Ascending aorta (tissue), 2 donors: ENCODE measurements at regions of chr15 and their contacts with region 1.

Region 1: DNA sequence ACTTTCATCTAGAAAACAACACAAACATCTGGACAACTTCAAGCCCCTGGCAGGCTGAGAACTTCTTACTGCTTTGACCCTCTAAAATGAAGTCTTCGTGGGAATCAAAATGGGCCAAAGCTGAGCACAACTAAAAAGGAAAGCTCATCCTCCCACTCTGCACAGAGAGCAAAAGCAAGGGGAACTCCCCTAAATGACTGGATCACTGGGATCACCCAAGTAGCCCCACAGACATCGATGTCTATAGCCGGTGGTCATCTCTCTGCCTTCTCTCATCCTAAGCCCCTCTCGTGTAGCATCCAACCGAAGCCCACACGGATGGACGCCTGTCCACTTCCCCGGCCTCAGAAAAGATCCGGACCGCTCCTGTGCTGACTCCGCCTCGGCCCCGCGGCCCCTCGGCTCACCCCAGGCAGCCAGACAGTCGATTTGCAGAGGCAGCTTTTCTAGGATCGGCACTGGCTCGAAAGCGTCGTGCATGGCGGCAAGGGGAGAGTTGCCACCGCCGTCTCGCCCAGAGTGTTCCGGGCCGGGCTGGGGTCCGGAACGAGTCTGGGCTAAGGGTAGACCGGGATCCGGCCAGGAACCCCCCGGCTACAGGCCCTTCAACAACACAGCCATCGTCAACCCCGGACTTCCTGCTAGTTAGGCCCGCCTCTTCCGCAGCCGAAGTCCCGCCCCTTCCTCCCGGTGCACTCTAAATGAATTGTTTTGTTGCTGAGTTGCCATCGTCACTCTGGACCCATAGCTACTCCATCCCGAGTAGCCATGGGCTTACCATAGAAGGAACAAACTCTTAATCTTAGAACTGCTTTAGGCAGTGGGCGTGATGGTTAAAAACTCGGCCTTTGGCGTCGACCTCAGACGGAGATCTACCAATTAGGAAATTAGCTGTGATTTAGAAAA is at the start of gene VPS39:
- DNase-seq: peak; percentile 53 to 93
- H3K4me3 ChIP-seq: peak within 1 kb of the TSS; percentile 72 to 99
- H3K27ac ChIP-seq: peak within 1 kb of the TSS; percentile 83
- H3K4me1 ChIP-seq: peaks cover 3 to 15% of the 10 kb centered on the region in 2 donors
- H3K27me3 ChIP-seq: no peaks in the 10 kb centered on the region
- CTCF ChIP-seq: no peak
- total RNA-seq, gene VPS39: 91.9 TPM

Region 2: GRCh38 chr15:41878355-41878699 is 329.6 kb before region 1 on chr15:
- intact Hi-C with region 1: no loop called
- DNase-seq: no peak
- H3K4me3 ChIP-seq: no peak overlapping the region
- H3K27ac ChIP-seq: no peak overlapping the region
- H3K4me1 ChIP-seq: peaks cover 0 to 10% of the 10 kb centered on the region in 2 donors
- H3K27me3 ChIP-seq: no peaks in the 10 kb centered on the region
- CTCF ChIP-seq: no peak

Region 3: DNA sequence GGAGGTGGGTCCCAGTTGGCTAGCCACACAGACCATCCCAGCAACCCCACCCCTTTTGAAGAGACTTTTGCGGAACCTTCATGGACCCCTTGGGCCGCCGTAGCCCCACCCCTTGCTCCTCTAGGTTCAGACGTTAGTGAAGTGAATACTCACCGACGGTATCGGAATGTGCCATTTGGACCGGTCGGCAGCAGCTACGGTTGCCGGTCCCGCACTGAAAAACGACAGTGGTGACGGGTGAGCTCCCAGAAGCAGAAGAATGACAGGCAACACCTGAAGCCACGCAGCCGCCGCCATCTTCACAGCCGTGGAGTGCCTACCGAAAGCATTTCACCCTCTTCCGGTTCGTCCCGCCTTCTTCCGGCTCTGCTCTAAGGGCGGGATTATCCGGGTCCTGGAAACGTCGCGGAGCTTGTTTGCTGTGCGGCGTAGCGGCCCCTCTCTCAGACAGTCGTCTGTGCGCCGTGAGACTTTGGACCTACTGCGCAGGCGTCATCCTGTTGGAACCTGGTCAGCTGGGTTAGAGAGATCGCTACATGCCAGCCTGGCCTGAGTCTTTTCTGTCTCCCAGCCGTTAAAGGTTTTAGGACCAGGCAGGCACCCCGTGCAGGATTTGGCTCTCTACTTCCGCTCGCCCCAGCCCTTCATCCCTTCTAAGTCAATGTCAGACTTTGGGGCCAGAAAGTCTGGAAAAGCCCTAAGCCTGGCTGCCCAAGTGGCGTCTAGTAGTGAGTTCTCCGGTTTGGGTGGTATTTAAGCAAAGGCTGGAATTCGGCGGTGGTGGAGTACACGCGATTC is 65.4 kb after region 1 on chr15 and contains the starts of genes GANC and TMEM87A:
- intact Hi-C with region 1: loop called (anchors 2 kb)
- DNase-seq: peak; percentile 93 to 99
- H3K4me3 ChIP-seq: peak within 1 kb of the TSS; percentile 74 to 89
- H3K27ac ChIP-seq: peak within 1 kb of the TSS; percentile 99 to 100
- H3K4me1 ChIP-seq: peaks cover 9 to 40% of the 10 kb centered on the region in 2 donors
- H3K27me3 ChIP-seq: no peaks in the 10 kb centered on the region
- CTCF ChIP-seq: no peak
- total RNA-seq, gene GANC: 22.9 TPM
- total RNA-seq, gene TMEM87A: 25.4 TPM